Posterior vena cava (tissue), 2 donors: ENCODE measurements at regions of chr11 and their contacts with region 1.

Region 1: GRCh38 chr11:8566613-8567210 is 27.3 kb downstream of the STK33 start:
- DNase-seq: no peak

Region 2: GRCh38 chr11:8219257-8220021 is 347.3 kb before region 1 on chr11:
- intact Hi-C with region 1: loop called (anchors 5 to 10 kb)
- DNase-seq: peak; percentile 64

Region 3: GRCh38 chr11:8338138-8338537 is 228.6 kb before region 1 on chr11:
- intact Hi-C with region 1: loop called in 1 of 2 experiments (anchors 10 kb)
- DNase-seq: no peak

Region 4: GRCh38 chr11:8512547-8512946 is 54.2 kb before region 1 on chr11:
- intact Hi-C with region 1: no loop called
- DNase-seq: no peak

Region 5: DNA sequence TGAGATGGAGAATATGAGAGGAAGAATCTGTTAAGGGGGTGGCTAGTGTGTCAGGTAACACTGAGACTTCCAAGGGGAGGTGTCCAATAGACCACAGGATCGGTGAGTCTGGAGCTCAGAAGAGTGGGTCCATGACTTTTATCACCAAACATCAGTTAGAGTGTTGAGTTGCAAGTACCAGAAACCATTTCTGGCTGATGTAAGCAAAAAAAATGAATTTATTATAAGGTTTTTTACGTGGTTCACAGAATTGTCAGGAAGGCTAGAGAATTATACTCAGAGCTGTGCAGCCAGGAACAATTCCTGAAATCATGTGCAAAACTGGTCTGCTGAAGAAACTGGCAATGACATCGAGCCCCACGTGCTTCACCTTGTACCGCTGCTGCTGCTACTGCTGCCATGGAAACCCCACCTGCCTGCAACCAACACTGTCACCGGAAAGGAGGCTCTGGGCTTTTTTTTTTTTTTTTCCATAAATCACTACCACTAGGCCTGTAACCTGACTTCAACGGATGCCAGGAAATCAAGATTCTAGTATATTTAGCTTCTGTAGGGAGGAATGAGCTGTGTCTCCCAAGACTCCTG is 43.9 kb after region 1 on chr11:
- intact Hi-C with region 1: no loop called
- DNase-seq: no peak